Aorta (tissue), 5 donors: ENCODE measurements at regions of chr4 and their contacts with region 1.

Region 1: DNA sequence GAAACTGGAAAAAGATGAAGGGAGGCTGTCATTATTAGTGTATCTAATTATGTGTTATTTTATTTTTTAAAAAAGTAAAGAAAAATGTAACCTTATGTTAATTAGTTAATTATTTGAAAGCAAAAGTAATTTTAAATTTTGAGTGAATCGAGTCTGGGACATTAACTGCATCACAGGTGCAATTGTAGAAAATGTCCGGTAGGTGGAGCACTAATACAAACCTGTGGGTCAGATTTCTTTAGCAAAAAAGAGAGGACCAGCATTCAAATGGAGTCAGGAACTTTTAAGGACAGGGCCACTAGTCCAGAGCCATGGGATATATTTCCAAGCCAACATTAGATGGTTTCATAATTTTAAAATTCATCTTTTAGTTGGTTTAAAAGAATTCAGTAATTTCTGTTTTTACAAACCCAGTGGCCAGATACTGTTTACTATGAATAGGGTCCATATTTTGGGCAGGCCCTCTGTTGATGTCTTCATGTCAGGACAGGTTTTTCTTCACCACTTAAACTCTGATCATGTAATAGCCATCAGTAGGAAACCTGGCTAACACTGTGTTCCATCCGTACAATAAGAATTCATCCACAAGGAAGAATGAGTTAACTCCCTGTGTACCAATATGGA is 27.2 kb downstream of the BST1 start:
- DNase-seq: no peak
- ATAC-seq: no peak
- H3K4me3 ChIP-seq: no peak overlapping the region
- H3K27ac ChIP-seq: no peak overlapping the region
- H3K4me1 ChIP-seq: no peaks in the 10 kb centered on the region
- H3K27me3 ChIP-seq: no peaks in the 10 kb centered on the region

Region 2: DNA sequence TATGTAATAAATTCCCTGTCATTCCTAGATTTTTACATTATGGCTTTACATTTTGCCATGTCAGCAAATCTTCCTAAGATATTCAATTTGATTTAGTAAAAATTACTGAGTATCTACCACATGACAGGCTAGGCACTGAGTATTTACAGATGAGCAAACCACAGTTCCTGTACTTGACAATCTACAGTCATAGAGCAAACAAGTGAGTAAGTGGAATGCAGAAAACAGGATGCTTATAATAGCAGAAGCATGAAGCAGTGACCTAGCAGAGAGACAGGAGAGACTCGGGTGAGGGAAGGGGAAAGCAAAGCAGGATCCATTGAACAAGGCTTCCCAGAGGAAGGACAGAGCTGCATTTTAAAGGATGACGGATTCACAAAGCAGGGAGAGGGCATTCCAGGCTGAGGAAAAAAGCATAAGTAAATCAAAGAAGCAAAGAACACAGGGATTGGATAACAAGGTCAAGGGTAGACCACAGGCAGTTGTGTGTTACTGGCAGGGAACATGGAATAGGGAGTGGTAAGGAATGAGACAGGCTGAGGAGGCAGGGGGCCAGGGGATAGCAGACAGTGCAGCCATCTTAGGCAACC is 426.9 kb before region 1 on chr4:
- intact Hi-C with region 1: no loop called
- DNase-seq: no peak
- ATAC-seq: no peak
- H3K4me3 ChIP-seq: no peak overlapping the region
- H3K27ac ChIP-seq: no peak overlapping the region
- H3K4me1 ChIP-seq: peaks cover 0 to 6% of the 10 kb centered on the region in 2 donors
- H3K27me3 ChIP-seq: no peaks in the 10 kb centered on the region

Region 3: GRCh38 chr4:15587649-15588048 is 142.4 kb before region 1 on chr4:
- intact Hi-C with region 1: no loop called
- DNase-seq: no peak
- ATAC-seq: peak; percentile 46
- H3K4me3 ChIP-seq: no peak overlapping the region
- H3K27ac ChIP-seq: no peak overlapping the region
- H3K4me1 ChIP-seq: peaks cover 1 to 2% of the 10 kb centered on the region in 2 donors
- H3K27me3 ChIP-seq: no peaks in the 10 kb centered on the region

Region 4: GRCh38 chr4:15675356-15675755 is 54.7 kb before region 1 on chr4:
- intact Hi-C with region 1: no loop called
- DNase-seq: no peak
- ATAC-seq: no peak
- H3K4me3 ChIP-seq: no peak overlapping the region
- H3K27ac ChIP-seq: no peak overlapping the region
- H3K4me1 ChIP-seq: no peaks in the 10 kb centered on the region
- H3K27me3 ChIP-seq: no peaks in the 10 kb centered on the region

Region 5: GRCh38 chr4:16001484-16001858 is 271.4 kb after region 1 on chr4:
- intact Hi-C with region 1: loop called in 1 of 2 experiments (anchors 10 kb)
- DNase-seq: peak in 1 of 2 donors; percentile 70
- ATAC-seq: peak; percentile 91
- H3K4me3 ChIP-seq: no peak overlapping the region
- H3K27ac ChIP-seq: no peak overlapping the region
- H3K4me1 ChIP-seq: no peaks in the 10 kb centered on the region
- H3K27me3 ChIP-seq: no peaks in the 10 kb centered on the region

Region 6: GRCh38 chr4:16116493-16116990 is 386.5 kb after region 1 on chr4:
- intact Hi-C with region 1: no loop called
- DNase-seq: no peak
- ATAC-seq: no peak
- H3K4me3 ChIP-seq: no peak overlapping the region
- H3K27ac ChIP-seq: no peak overlapping the region
- H3K4me1 ChIP-seq: no peaks in the 10 kb centered on the region
- H3K27me3 ChIP-seq: no peaks in the 10 kb centered on the region